Pancreas (tissue), 10 donors: ENCODE measurements at regions of chr17 and their contacts with region 1.

Region 1: DNA sequence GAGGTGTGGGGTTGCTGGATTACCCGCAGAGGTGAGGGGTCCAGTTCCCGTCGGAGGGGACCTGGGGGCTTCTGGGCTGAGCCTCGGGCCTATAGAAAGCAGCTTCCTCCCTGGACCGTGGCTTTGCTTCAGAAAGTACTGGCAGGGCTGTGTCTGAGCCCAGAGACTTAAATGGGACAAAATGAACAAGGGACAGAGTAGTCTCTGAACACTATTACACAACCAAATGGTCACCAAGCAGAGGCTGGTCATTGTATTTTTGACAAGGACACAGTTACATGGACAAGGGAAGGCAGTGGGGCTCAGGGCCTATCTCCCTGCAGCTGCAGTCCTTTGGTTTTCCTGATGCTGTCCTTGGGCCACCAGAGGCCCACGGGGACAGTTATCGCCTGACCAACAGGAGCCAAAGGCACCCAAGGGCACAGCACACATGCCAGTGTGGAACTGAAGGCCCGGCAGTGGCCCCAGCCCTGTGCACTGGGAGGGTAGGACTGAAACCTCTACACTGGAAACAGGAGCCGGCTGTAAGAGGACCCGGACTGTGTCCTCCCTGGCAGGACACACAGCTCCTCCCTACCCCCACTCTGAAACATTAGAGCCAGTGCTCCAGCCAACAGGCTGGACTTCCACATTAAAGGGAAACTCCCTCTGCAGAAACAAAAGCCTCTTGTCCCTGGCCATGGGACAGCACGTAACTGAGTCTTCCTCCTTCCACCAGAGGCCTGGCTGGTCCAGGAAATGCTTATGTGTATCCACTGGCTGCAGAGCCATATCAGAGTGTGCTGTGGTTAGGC is 26.0 kb upstream of the ERN1 start:
- DNase-seq: peak; percentile 56 to 83 (median 70)
- ATAC-seq: peak; percentile 64 to 83 (median 80)
- H3K4me3 ChIP-seq: no peak overlapping the region
- H3K27ac ChIP-seq: peak overlapping the region; percentile 43 to 90 (median 70)
- H3K4me1 ChIP-seq: peaks cover 36 to 64% (median 62%) of the 10 kb centered on the region in 3 donors
- H3K27me3 ChIP-seq: no peaks in the 10 kb centered on the region
- CTCF ChIP-seq: no peak

Region 2: DNA sequence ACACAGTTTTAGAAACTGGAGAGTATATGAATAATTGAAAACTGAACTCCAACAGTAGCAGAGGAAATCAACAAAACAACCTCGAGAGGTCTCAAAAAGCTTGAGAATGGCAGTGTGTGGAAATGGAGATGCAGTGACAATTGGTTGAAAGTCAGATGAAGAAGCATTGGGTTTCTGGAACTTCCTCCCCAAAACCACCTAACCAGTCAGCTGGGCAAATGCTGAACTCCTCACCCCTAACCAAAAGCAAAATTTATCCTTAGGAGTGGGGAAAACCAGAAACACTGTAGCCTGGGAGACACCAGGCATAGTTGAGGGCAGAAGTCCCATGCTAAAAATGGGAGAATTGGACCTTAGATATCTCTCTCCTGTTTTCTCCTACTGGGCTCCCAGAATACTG is 1080.0 kb before region 1 on chr17:
- intact Hi-C with region 1: no loop called
- DNase-seq: no peak
- ATAC-seq: no peak
- H3K4me3 ChIP-seq: no peak overlapping the region
- H3K27ac ChIP-seq: no peak overlapping the region
- H3K4me1 ChIP-seq: no peaks in the 10 kb centered on the region
- H3K27me3 ChIP-seq: no peaks in the 10 kb centered on the region
- CTCF ChIP-seq: no peak

Region 3: DNA sequence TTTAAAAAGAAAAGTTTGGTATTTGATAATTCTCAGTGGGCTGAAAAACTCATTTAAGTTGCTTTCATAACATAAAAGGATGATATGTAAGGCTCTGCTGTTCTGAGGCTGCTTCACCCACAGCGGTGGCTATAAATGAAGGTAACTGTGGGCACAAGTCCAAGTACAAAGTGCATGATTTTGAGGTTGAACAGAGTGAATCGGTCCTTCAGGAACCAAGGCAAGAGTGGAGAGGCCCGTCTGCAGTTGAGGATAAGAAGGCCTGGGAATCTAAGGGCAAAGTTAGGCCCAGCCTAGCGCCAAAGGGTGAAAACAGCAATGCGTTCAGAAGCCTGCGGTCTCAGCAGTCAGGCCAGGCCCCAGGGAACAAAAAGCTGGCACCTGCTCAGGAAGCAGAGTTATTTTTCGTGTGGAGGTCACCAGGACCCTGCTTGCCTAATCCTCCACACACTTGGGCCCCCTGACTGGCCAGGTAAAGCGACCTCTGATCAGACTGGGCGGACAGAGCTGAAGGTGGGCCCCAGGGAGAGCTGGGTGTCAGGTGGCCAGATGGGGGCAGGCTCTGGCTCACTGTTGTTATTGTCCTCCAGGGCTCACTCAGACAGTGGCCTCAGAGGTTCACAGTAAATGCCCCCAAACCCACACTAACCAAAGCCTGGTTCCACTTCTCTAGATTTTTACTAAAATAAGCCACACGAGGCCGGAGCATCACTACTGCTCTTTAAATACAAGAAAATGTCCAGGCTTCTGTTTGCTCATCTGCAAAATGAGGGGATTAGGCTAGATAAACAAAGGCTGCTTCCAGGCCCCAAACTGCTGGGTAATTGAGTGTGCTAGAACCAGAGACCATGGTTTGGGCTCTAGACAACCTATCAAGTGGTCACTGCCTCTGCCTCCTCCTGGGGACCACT is 60.6 kb after region 1 on chr17:
- intact Hi-C with region 1: loop called in 1 of 3 experiments (anchors 10 kb)
- DNase-seq: peak; percentile 39 to 63 (median 44)
- ATAC-seq: peak; percentile 60 to 85 (median 73)
- H3K4me3 ChIP-seq: no peak overlapping the region
- H3K27ac ChIP-seq: peak overlapping the region in 3 of 4 donors; percentile 53 to 75 (median 71)
- H3K4me1 ChIP-seq: peaks cover 14 to 25% (median 19%) of the 10 kb centered on the region in 3 donors
- H3K27me3 ChIP-seq: no peaks in the 10 kb centered on the region
- CTCF ChIP-seq: no peak

Region 4: GRCh38 chr17:64262417-64263260 is 106.7 kb after region 1 on chr17 and contains the start of gene TEX2:
- intact Hi-C with region 1: loop called in 2 of 3 experiments (anchors 5 to 10 kb)
- DNase-seq: peak; percentile 69 to 89 (median 78)
- ATAC-seq: peak; percentile 59 to 74 (median 70)
- H3K4me3 ChIP-seq: peak within 1 kb of the TSS; percentile 83 to 97 (median 90)
- H3K27ac ChIP-seq: peak within 1 kb of the TSS; percentile 81 to 90 (median 84)
- H3K4me1 ChIP-seq: peaks cover 18 to 22% (median 21%) of the 10 kb centered on the region in 3 donors
- H3K27me3 ChIP-seq: no peaks in the 10 kb centered on the region
- CTCF ChIP-seq: no peak
- total RNA-seq, gene TEX2: 19.5 to 30.3 (median 26.5) TPM

Region 5: DNA sequence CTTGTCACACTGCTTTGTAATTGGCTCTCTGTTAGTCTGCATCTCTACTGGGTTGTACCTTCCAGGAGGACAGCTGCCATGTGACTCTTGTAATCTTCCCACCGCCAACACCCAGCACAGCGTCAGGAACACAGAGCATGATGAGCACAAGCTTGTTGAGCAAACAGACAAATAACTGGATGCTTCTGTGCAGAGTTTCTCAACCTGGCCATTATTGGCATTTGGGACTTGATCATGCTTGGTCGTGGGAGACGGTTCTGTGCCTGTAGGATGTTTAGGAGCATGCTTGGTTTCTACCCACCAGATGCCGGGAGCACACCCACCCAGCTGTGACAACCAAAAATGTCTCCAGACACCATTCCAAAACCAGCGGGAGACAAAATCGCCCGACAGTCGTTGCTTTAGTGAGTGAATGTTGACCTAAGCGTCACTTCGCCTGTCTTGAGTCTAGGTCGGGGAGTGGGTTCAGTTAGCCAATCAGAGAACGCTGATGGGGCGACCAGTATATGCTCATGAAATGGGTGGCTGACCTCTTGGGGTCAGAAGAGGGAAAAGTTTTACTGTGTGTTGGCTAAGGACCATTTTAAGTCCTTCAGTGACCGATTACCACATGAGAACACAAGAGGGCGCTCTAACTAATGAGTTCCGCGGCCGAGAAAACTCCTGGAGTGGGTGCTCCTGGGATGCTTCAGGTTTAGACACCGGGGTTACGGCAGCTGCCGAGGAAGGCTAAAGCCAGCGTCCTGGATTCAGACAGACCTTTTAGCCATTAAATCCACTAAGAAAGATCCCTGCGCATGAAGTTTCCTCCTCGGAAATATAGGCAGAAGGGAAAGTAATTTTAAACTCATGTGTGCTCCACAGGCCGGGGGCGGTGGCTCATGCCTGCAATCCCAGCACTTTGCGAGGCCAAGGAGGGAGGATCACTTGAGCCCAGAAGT is 164.9 kb after region 1 on chr17:
- intact Hi-C with region 1: no loop called
- DNase-seq: peak in 3 of 6 donors; percentile 36 to 58 (median 45)
- ATAC-seq: peak; percentile 58 to 94 (median 86)
- H3K4me3 ChIP-seq: no peak overlapping the region
- H3K27ac ChIP-seq: no peak overlapping the region
- H3K4me1 ChIP-seq: no peaks in the 10 kb centered on the region
- H3K27me3 ChIP-seq: no peaks in the 10 kb centered on the region
- CTCF ChIP-seq: peak; percentile 57 to 78 (median 75)

Region 6: GRCh38 chr17:64377769-64378282 is 221.9 kb after region 1 on chr17:
- intact Hi-C with region 1: no loop called
- DNase-seq: no peak
- ATAC-seq: no peak
- H3K4me3 ChIP-seq: no peak overlapping the region
- H3K27ac ChIP-seq: no peak overlapping the region
- H3K4me1 ChIP-seq: no peaks in the 10 kb centered on the region
- H3K27me3 ChIP-seq: no peaks in the 10 kb centered on the region
- CTCF ChIP-seq: no peak

Region 7: GRCh38 chr17:64496786-64497564 is 341.0 kb after region 1 on chr17 and contains the start of gene POLG2:
- intact Hi-C with region 1: no loop called
- DNase-seq: peak; percentile 89 to 98 (median 92)
- ATAC-seq: peak; percentile 94 to 98 (median 98)
- H3K4me3 ChIP-seq: peak within 1 kb of the TSS; percentile 66 to 79 (median 70)
- H3K27ac ChIP-seq: peak within 1 kb of the TSS; percentile 6 to 77 (median 40)
- H3K4me1 ChIP-seq: peaks cover 0 to 39% (median 23%) of the 10 kb centered on the region in 3 donors
- H3K27me3 ChIP-seq: no peaks in the 10 kb centered on the region
- CTCF ChIP-seq: peak in 1 of 4 donors; percentile 11
- total RNA-seq, gene POLG2: 4.8 to 12.9 (median 6.9) TPM